CD8-positive, alpha-beta memory T cell (primary cell): ENCODE measurements at regions of chrX and their contacts with region 1.

Region 1: GRCh38 chrX:79096145-79096556 is 48.3 kb upstream of the GPR174 start:
- DNase-seq: peak in 2 of 5 donors; percentile 23 to 31
- H3K4me3 ChIP-seq: peak overlapping the region; percentile 11
- H3K4me3 Mint-ChIP-seq: peak overlapping the region; percentile 3 to 60 (median 49)
- H3K27ac ChIP-seq: no peak overlapping the region
- H3K27ac Mint-ChIP-seq: peak overlapping the region; percentile 87 to 99 (median 90)
- H3K4me1 ChIP-seq: peaks cover 40% of the 10 kb centered on the region
- H3K4me1 Mint-ChIP-seq: peaks cover 53 to 89% (median 72%) of the 10 kb centered on the region in 3 donors
- H3K27me3 ChIP-seq: no peaks in the 10 kb centered on the region
- H3K27me3 Mint-ChIP-seq: no peaks in the 10 kb centered on the region

Region 2: DNA sequence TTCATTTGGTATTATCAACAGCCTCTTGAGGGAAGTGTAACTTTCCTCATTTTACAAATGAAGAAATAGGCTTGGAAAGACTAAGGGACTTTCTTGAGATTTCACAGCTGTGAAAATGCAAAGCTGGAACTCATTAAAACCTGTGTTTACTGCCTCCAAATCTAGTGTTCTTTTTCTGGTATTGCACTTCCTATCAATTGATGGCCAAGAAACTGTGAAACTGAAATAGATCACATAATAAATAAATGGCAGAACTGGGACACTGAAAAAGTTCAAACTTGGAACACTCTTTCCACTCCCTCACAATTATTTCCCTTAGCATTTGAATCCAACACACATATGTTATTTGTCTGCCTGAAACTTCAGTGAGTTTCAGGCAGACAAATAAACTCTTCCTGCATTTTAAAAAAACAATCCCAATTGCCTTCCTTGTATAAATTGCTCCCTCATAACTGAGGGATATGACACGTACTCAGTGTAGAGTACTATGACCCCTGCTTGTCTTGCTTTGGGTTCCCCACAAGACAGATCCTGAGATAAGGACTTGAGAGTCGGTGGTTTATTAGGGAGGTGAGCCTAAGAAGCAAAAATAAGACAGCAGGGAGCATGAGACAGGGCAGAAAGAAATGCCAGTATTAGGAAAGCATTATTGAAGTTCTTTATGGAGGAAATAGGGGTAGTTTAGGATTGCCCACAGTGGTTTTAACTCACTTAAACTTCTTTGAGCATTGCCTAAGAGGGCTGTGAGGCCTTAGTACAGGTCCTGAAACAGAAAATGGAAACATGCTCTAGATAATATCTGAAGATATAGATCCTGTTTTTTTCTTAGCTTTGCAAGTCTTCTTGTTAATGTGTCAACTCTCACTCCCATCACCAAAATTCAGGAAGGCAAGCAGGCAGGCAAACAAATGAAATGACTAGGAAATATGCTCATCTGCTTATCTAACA is 470.9 kb before region 1 on chrX:
- CTCF ChIA-PET with region 1: no interaction called
- POLR2A ChIA-PET with region 1: no interaction called
- DNase-seq: no peak
- H3K4me3 ChIP-seq: no peak overlapping the region
- H3K4me3 Mint-ChIP-seq: no peak overlapping the region
- H3K27ac ChIP-seq: no peak overlapping the region
- H3K27ac Mint-ChIP-seq: no peak overlapping the region
- H3K4me1 ChIP-seq: no peaks in the 10 kb centered on the region
- H3K4me1 Mint-ChIP-seq: peaks cover 2 to 24% (median 18%) of the 10 kb centered on the region in 3 donors
- H3K27me3 ChIP-seq: no peaks in the 10 kb centered on the region
- H3K27me3 Mint-ChIP-seq: peaks cover 0 to 8% of the 10 kb centered on the region in 2 donors

Region 3: DNA sequence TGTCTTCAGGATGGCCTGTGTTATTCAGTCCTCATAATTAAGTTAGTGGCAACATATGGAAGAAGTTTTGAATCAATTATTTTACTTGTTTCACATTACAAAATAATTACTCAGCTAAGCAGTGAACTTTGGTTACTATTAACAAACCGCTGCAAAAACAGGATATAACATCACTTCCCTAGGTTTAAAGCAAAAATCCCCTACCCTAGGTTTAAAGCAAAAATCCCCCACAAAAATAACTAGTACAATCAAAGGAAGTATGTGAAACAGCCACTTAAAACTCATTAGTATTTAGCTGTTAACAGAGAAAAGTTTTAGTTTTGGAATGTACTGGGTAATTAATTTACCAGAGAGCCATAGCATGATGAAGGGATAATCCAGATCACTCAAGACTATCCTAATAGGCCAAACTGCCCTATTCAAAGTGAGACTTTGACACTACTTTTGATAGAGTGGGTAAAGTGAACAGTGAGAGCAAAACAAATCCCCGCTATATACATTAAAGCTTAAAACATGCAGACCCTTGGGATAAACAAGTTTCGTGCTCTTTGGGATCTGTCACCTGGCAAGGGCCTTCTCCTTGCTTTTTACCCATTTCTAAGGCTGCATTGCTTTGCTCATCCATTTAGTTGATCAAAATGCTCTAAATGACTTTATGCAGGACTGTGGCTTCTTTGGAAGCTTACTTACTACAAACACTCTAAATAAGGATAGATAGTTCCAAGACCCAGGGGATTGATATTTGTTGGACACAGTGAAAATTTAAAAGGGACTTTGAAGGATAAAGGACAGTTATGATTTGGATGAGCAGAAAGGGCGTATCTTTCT is 12.0 kb after region 1 on chrX:
- CTCF ChIA-PET with region 1: interaction called, 3 read pairs
- POLR2A ChIA-PET with region 1: interaction called, 11 read pairs
- DNase-seq: peak in 2 of 5 donors; percentile 70 to 75
- H3K4me3 ChIP-seq: peak overlapping the region; percentile 46
- H3K4me3 Mint-ChIP-seq: peak overlapping the region; percentile 41 to 73 (median 60)
- H3K27ac ChIP-seq: peak overlapping the region; percentile 74
- H3K27ac Mint-ChIP-seq: peak overlapping the region; percentile 90 to 99 (median 96)
- H3K4me1 ChIP-seq: peaks cover 52% of the 10 kb centered on the region
- H3K4me1 Mint-ChIP-seq: peaks cover 46 to 78% (median 72%) of the 10 kb centered on the region in 3 donors
- H3K27me3 ChIP-seq: no peaks in the 10 kb centered on the region
- H3K27me3 Mint-ChIP-seq: no peaks in the 10 kb centered on the region